Activated T-helper 1 cell treated with anti-CD3 and anti-CD28 coated beads, Interleukin-12 subunit alpha, Interleukin-12 subunit beta, Interleukin-2, Interleukin-4 antibody, amounts not matched to agents 30 ng/mL and 10 ng/mL and 1 ng/mL, durations not matched to agents 14 hours and 24 hours and 36 hours (primary cell): ENCODE measurements at regions of chrX and their contacts with region 1.

Region 1: GRCh38 chrX:40175511-40176350 is 78.0 kb upstream of the BCOR start:
- DNase-seq: peak; percentile 61
- H3K4me3 Mint-ChIP-seq: peak overlapping the region; percentile 82
- H3K27ac Mint-ChIP-seq: peak overlapping the region; percentile 99
- H3K4me1 Mint-ChIP-seq: peaks cover 37% of the 10 kb centered on the region
- H3K27me3 Mint-ChIP-seq: no peaks in the 10 kb centered on the region

Region 2: DNA sequence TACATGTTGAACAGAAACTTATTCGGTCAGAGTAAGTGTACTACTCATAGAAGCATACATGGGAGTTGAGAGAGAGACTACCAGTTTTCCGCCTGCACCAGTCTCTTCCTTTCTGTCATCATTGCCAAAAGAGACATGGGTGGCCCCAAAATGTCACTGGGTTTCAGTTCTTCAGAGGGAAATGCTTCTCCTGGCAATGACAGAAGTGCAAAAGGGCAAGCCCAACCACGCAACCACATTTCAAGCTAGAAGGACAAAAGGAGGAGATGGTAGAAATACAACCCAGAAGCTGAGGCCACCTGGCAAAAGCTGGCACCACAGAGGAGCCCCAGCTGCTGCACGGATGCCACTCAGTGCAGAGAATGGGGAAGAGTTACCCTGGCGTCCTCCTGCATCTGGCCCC is 398.1 kb before region 1 on chrX:
- intact Hi-C with region 1: loop called (anchors 2 kb)
- DNase-seq: peak; percentile 2
- H3K4me3 Mint-ChIP-seq: peak overlapping the region; percentile 30
- H3K27ac Mint-ChIP-seq: peak overlapping the region; percentile 93
- H3K4me1 Mint-ChIP-seq: peaks cover 45% of the 10 kb centered on the region
- H3K27me3 Mint-ChIP-seq: no peaks in the 10 kb centered on the region

Region 3: DNA sequence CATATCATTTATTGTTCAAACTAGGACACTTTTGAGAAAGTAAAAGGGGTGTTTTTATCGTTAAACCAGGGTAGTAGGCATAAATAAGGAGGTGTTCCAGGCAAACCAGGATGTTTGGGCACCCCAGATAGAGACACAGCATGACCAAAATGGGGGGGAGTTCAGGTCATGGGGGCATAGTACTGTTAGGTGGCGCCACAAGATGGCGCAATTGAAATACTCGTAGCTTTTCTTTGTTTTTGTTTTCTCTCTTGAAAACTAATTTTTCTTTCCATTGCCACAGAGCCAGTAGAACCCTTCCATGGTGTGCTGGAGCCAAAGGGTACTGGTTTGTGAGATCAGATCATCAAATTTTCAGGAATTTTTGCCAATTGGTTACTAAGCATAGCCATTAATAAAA is 361.3 kb before region 1 on chrX:
- intact Hi-C with region 1: loop called (anchors 2 kb)
- DNase-seq: peak; percentile 8
- H3K4me3 Mint-ChIP-seq: no peak overlapping the region
- H3K27ac Mint-ChIP-seq: no peak overlapping the region
- H3K4me1 Mint-ChIP-seq: peaks cover 42% of the 10 kb centered on the region
- H3K27me3 Mint-ChIP-seq: no peaks in the 10 kb centered on the region

Region 4: DNA sequence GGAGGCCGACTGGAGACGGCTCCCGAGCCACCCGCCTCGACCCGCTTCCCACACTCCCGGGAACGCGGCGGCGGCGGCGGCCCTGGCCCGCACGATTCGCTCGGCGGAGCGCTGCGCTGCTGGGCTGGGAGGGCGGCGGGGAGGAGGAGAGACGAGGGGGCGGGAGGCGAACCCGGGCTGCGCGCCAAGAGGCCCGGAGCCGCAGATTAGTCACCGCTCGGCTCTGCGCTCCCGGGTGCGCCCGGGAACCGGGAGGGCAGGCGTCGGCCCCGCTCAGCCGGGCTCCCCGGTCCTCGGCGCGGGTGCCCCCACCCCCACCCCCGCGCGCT is 66.8 kb before region 1 on chrX:
- intact Hi-C with region 1: loop called (anchors 2 kb)
- DNase-seq: peak; percentile 30
- H3K4me3 Mint-ChIP-seq: no peak overlapping the region
- H3K27ac Mint-ChIP-seq: no peak overlapping the region
- H3K4me1 Mint-ChIP-seq: peaks cover 6% of the 10 kb centered on the region
- H3K27me3 Mint-ChIP-seq: peaks cover 3% of the 10 kb centered on the region

Region 5: GRCh38 chrX:40153335-40154249 is 22.1 kb before region 1 on chrX:
- intact Hi-C with region 1: loop called (anchors 1 kb)
- DNase-seq: peak; percentile 40
- H3K4me3 Mint-ChIP-seq: peak overlapping the region; percentile 81
- H3K27ac Mint-ChIP-seq: peak overlapping the region; percentile 86
- H3K4me1 Mint-ChIP-seq: peaks cover 12% of the 10 kb centered on the region
- H3K27me3 Mint-ChIP-seq: peaks cover under 1% of the 10 kb centered on the region

Region 6: GRCh38 chrX:40266490-40267333 is 91.0 kb after region 1 on chrX:
- intact Hi-C with region 1: loop called (anchors 2 kb)
- DNase-seq: peak; percentile 8
- H3K4me3 Mint-ChIP-seq: peak overlapping the region; percentile 73
- H3K27ac Mint-ChIP-seq: no peak overlapping the region
- H3K4me1 Mint-ChIP-seq: peaks cover 6% of the 10 kb centered on the region
- H3K27me3 Mint-ChIP-seq: peaks cover 2% of the 10 kb centered on the region

Region 7: DNA sequence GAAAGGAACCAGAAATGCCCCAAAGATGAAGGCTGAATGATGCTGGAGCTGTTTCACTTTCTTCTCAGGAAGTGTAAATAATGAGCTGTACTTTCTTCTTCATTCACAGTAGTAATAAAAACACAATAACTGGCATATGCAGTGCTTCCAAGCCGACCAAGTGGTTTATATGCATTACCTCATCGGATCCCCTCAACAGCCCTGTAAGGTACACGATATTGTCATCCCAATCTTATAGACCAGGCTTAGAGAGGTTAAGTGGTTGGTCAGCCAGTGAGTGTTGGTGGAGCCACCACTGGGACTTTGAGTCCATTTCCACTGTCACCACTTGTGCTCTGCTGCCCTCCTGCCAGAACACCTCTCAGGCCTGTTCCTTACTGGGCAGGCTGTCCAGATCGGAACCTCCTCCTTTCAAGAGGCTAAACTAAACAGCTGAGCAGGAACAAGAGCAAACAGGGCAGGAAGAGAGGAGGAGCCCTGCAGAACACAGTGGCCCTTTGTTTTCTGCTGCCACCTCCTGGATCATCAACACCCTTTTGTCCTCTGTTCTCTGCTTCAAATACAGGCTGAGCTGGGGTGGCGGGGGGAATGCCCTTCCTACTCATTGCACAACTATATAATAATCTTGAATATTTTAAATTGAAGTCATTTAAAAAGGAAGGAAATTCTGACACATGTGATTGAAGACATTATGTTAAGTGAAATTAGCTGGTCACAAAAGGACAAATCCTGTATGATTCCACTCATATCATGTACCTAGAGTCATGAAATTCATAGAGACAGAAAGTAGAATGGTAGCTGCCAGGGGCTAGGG is 292.5 kb after region 1 on chrX:
- intact Hi-C with region 1: loop called (anchors 5 kb)
- DNase-seq: peak; percentile 16
- H3K4me3 Mint-ChIP-seq: no peak overlapping the region
- H3K27ac Mint-ChIP-seq: peak overlapping the region; percentile 20
- H3K4me1 Mint-ChIP-seq: peaks cover 27% of the 10 kb centered on the region
- H3K27me3 Mint-ChIP-seq: peaks cover 4% of the 10 kb centered on the region

Region 8: GRCh38 chrX:40607381-40607780 is 431.6 kb after region 1 on chrX:
- intact Hi-C with region 1: no loop called
- DNase-seq: no peak
- H3K4me3 Mint-ChIP-seq: no peak overlapping the region
- H3K27ac Mint-ChIP-seq: no peak overlapping the region
- H3K4me1 Mint-ChIP-seq: no peaks in the 10 kb centered on the region
- H3K27me3 Mint-ChIP-seq: no peaks in the 10 kb centered on the region